Activated CD4-positive, alpha-beta memory T cell treated with anti-CD3 and anti-CD28 coated beads for 36 hours (primary cell): ENCODE measurements at regions of chr15 and their contacts with region 1.

Region 1: DNA sequence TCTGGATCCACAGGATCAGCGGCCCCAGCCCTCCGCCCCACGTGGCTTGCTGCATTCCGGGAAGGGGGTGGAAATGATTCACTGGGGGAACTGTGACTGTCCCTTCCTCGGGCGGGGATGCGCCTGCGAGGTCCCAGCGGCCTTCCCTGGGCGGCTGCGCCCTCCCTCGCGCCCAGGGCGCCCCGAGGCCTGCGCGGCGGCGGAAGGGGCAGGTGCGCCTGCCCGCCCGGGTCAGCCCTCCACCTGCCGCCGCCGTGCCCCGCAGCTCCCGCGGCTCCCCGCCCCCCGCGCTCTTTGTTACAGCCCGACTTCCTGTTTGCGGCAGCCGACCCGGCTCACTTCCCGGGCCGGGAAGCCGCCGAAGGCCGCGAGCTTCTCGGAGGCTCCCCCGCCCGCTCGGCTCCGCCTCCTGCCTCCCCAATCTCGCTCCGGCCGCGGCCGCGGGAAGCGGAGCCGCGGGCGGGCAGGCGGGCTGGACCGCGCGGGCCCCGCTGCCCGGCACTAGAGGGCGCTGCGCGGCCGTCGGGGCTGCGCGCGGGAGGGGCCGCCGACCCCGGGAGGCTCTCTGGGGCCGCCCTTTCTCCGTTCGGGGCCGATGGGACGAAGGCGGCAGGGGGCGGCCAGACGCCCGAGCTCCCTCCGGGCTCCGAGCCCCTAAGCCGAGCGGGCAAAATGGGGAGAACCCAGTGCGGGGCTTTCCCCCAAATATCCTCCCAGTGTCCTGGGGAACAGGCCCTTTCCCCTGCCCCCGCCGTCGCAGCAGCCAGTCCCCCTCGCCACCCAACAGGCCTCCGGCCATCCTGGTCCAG is 11.5 kb upstream of the CHAC1 start:
- DNase-seq: peak; percentile 76
- H3K4me3 Mint-ChIP-seq: peak overlapping the region; percentile 77
- H3K27ac Mint-ChIP-seq: peak overlapping the region; percentile 61
- H3K4me1 Mint-ChIP-seq: peaks cover 31% of the 10 kb centered on the region
- H3K27me3 Mint-ChIP-seq: no peaks in the 10 kb centered on the region

Region 2: GRCh38 chr15:40582726-40583246 is 358.9 kb before region 1 on chr15:
- CTCF ChIA-PET with region 1: no interaction called
- POLR2A ChIA-PET with region 1: no interaction called
- intact Hi-C with region 1: no loop called
- DNase-seq: no peak
- H3K4me3 Mint-ChIP-seq: no peak overlapping the region
- H3K27ac Mint-ChIP-seq: no peak overlapping the region
- H3K4me1 Mint-ChIP-seq: peaks cover 3% of the 10 kb centered on the region
- H3K27me3 Mint-ChIP-seq: no peaks in the 10 kb centered on the region

Region 3: GRCh38 chr15:40928821-40929659 is 12.7 kb before region 1 on chr15 and contains the start of gene DLL4:
- CTCF ChIA-PET with region 1: interaction called, 74 read pairs
- POLR2A ChIA-PET with region 1: interaction called, 21 read pairs
- intact Hi-C with region 1: no loop called
- DNase-seq: peak; percentile 53
- H3K4me3 Mint-ChIP-seq: peak within 1 kb of the TSS; percentile 51
- H3K27ac Mint-ChIP-seq: no peak within 1 kb of the TSS
- H3K4me1 Mint-ChIP-seq: peaks cover 40% of the 10 kb centered on the region
- H3K27me3 Mint-ChIP-seq: peaks cover 62% of the 10 kb centered on the region
- total RNA-seq, gene DLL4: not detected

Region 4: DNA sequence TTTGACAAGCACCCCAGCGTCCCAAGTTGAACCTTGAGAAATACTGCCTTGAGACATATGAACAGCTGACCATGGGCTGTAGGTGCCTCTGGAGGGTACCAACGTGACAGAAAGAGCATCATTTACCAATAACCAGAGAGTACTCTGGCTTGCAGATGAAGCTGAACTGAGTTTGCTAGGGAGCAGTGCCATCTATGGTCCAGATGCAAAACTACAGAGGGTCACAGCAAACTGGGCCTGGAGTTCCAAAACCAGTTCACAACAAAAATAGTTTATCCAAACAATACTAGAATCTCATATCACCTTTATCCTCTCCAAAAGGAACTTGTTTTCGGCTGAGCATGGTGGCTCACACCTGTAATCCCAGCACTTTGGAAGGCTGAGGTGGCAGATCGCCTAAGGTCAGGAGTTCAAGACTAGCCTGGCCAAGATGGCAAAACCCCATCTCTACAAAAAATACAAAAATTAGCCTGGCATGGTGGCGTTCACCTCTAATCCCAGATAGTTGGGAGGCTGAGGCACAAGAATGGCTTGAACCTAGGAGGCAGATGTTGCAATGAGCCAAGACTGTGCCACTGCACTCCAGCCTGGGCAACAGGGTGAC is 80.9 kb after region 1 on chr15:
- CTCF ChIA-PET with region 1: interaction called, 10 read pairs
- POLR2A ChIA-PET with region 1: no interaction called
- intact Hi-C with region 1: no loop called
- DNase-seq: peak; percentile 49
- H3K4me3 Mint-ChIP-seq: no peak overlapping the region
- H3K27ac Mint-ChIP-seq: no peak overlapping the region
- H3K4me1 Mint-ChIP-seq: no peaks in the 10 kb centered on the region
- H3K27me3 Mint-ChIP-seq: no peaks in the 10 kb centered on the region

Region 5: GRCh38 chr15:41180206-41180789 is 238.6 kb after region 1 on chr15:
- CTCF ChIA-PET with region 1: interaction called, 24 read pairs
- POLR2A ChIA-PET with region 1: no interaction called
- intact Hi-C with region 1: loop called (anchors 10 kb)
- DNase-seq: no peak
- H3K4me3 Mint-ChIP-seq: no peak overlapping the region
- H3K27ac Mint-ChIP-seq: no peak overlapping the region
- H3K4me1 Mint-ChIP-seq: no peaks in the 10 kb centered on the region
- H3K27me3 Mint-ChIP-seq: no peaks in the 10 kb centered on the region